CD14-positive monocyte (primary cell): ENCODE measurements at regions of chr9 and their contacts with region 1.

Region 1: GRCh38 chr9:121201738-121202533 is at the start of gene RAB14:
- DNase-seq: peak; percentile 99
- H3K4me3 ChIP-seq: peak within 1 kb of the TSS; percentile 88 to 97 (median 89)
- H3K4me3 Mint-ChIP-seq: peak within 1 kb of the TSS; percentile 92 to 95
- H3K27ac ChIP-seq: peak within 1 kb of the TSS; percentile 84 to 88
- H3K27ac Mint-ChIP-seq: peak within 1 kb of the TSS; percentile 89 to 97 (median 96)
- H3K4me1 ChIP-seq: peaks cover 36 to 61% of the 10 kb centered on the region in 2 donors
- H3K4me1 Mint-ChIP-seq: peaks cover 59% of the 10 kb centered on the region
- H3K27me3 ChIP-seq: no peaks in the 10 kb centered on the region
- H3K27me3 Mint-ChIP-seq: no peaks in the 10 kb centered on the region
- CTCF ChIP-seq: peak; percentile 45
- polyA plus RNA-seq, gene RAB14: 23.1 to 60.0 (median 44.4) TPM

Region 2: GRCh38 chr9:121141706-121142105 is 60.2 kb before region 1 on chr9:
- intact Hi-C with region 1: no loop called
- DNase-seq: no peak
- H3K4me3 ChIP-seq: no peak overlapping the region
- H3K4me3 Mint-ChIP-seq: no peak overlapping the region
- H3K27ac ChIP-seq: no peak overlapping the region
- H3K27ac Mint-ChIP-seq: no peak overlapping the region
- H3K4me1 ChIP-seq: no peaks in the 10 kb centered on the region
- H3K4me1 Mint-ChIP-seq: no peaks in the 10 kb centered on the region
- H3K27me3 ChIP-seq: no peaks in the 10 kb centered on the region
- H3K27me3 Mint-ChIP-seq: no peaks in the 10 kb centered on the region
- CTCF ChIP-seq: no peak

Region 3: GRCh38 chr9:121253821-121254471 is 52.0 kb after region 1 on chr9:
- intact Hi-C with region 1: loop called in 1 of 2 experiments (anchors 5 kb)
- DNase-seq: peak in 2 of 3 donors; percentile 51 to 69
- H3K4me3 ChIP-seq: peak overlapping the region in 1 of 3 experiments; percentile 45
- H3K4me3 Mint-ChIP-seq: peak overlapping the region in 1 of 2 donors; percentile 73
- H3K27ac ChIP-seq: peak overlapping the region; percentile 4 to 13
- H3K27ac Mint-ChIP-seq: peak overlapping the region; percentile 79 to 90 (median 86)
- H3K4me1 ChIP-seq: peaks cover 56 to 62% of the 10 kb centered on the region in 2 donors
- H3K4me1 Mint-ChIP-seq: peaks cover 50% of the 10 kb centered on the region
- H3K27me3 ChIP-seq: no peaks in the 10 kb centered on the region
- H3K27me3 Mint-ChIP-seq: peaks cover 1 to 2% (median 1%) of the 10 kb centered on the region in 3 donors
- CTCF ChIP-seq: no peak

Region 4: GRCh38 chr9:121286973-121287741 is 85.2 kb after region 1 on chr9:
- intact Hi-C with region 1: loop called in 1 of 2 experiments (anchors 5 kb)
- DNase-seq: peak; percentile 67 to 86 (median 81)
- H3K4me3 ChIP-seq: peak overlapping the region in 1 of 3 experiments; percentile 67
- H3K4me3 Mint-ChIP-seq: peak overlapping the region in 1 of 2 donors; percentile 87
- H3K27ac ChIP-seq: peak overlapping the region; percentile 32 to 80
- H3K27ac Mint-ChIP-seq: peak overlapping the region; percentile 74 to 91 (median 88)
- H3K4me1 ChIP-seq: peaks cover 73 to 80% of the 10 kb centered on the region in 2 donors
- H3K4me1 Mint-ChIP-seq: peaks cover 76% of the 10 kb centered on the region
- H3K27me3 ChIP-seq: no peaks in the 10 kb centered on the region
- H3K27me3 Mint-ChIP-seq: peaks cover 0 to 2% (median 2%) of the 10 kb centered on the region in 3 donors
- CTCF ChIP-seq: no peak

Region 5: DNA sequence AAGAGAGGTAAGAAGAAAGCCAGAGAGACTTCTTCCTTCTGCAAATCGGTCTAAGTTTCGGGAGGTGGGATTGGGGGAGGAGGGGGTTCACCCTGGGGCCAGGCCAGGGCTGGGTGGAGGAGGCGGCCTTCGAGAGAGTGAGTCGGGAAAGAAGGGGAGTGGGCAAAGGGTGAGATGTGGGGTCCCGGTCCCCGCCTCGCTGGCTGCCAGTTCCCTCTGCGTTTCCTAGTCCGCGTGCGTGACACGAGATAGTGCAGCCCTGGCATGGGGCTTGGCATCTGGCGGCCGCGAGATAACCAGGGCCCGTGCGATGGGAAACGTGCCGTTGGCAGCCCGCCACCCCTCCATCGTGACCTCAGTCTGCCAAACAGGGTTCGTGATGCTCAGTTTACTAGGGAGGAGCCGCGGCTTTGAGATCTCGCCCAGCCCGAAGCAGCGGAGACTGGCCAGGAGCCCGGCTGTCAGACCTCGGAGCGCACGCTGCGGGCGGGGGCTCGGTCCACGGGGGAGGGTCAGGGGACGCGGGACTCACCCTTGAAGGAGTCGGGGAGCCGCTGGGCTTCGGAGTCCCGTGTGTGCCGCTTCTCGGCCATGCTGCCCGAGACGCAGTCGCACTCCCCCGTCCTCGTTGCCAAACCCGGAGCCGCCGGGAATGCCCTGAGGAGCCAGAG is 167.8 kb after region 1 on chr9 and contains the start of gene STOM:
- intact Hi-C with region 1: loop called in 1 of 2 experiments (anchors 5 kb)
- DNase-seq: peak; percentile 54 to 68 (median 62)
- H3K4me3 ChIP-seq: peak within 1 kb of the TSS; percentile 78 to 87 (median 84)
- H3K4me3 Mint-ChIP-seq: peak within 1 kb of the TSS; percentile 95 to 99
- H3K27ac ChIP-seq: peak within 1 kb of the TSS; percentile 72 to 82
- H3K27ac Mint-ChIP-seq: peak within 1 kb of the TSS; percentile 91 to 94 (median 93)
- H3K4me1 ChIP-seq: peaks cover 27 to 52% of the 10 kb centered on the region in 2 donors
- H3K4me1 Mint-ChIP-seq: peaks cover 65% of the 10 kb centered on the region
- H3K27me3 ChIP-seq: no peaks in the 10 kb centered on the region
- H3K27me3 Mint-ChIP-seq: peaks cover 0 to 2% (median 1%) of the 10 kb centered on the region in 3 donors
- CTCF ChIP-seq: no peak
- polyA plus RNA-seq, gene STOM: 23.8 to 66.9 (median 63.8) TPM

Region 6: GRCh38 chr9:121399883-121400607 is 198.1 kb after region 1 on chr9:
- intact Hi-C with region 1: loop called in 1 of 2 experiments (anchors 5 kb)
- DNase-seq: peak; percentile 44 to 75 (median 65)
- H3K4me3 ChIP-seq: no peak overlapping the region
- H3K4me3 Mint-ChIP-seq: no peak overlapping the region
- H3K27ac ChIP-seq: no peak overlapping the region
- H3K27ac Mint-ChIP-seq: no peak overlapping the region
- H3K4me1 ChIP-seq: peaks cover 0 to under 1% of the 10 kb centered on the region in 2 donors
- H3K4me1 Mint-ChIP-seq: peaks cover 3% of the 10 kb centered on the region
- H3K27me3 ChIP-seq: no peaks in the 10 kb centered on the region
- H3K27me3 Mint-ChIP-seq: no peaks in the 10 kb centered on the region
- CTCF ChIP-seq: peak; percentile 81